B cell (primary cell): ENCODE measurements at regions of chr7 and their contacts with region 1.

Region 1: GRCh38 chr7:116180302-116180701 is 30.0 kb upstream of the TES start:
- DNase-seq: peak; percentile 73
- ATAC-seq: peak; percentile 80
- H3K4me3 ChIP-seq: no peak overlapping the region
- H3K4me3 Mint-ChIP-seq: no peak overlapping the region
- H3K27ac ChIP-seq: no peak overlapping the region
- H3K27ac Mint-ChIP-seq: no peak overlapping the region
- H3K4me1 ChIP-seq: no peaks in the 10 kb centered on the region
- H3K4me1 Mint-ChIP-seq: no peaks in the 10 kb centered on the region
- H3K27me3 ChIP-seq: no peaks in the 10 kb centered on the region
- H3K27me3 Mint-ChIP-seq: no peaks in the 10 kb centered on the region
- CTCF ChIP-seq: peak; percentile 85

Region 2: GRCh38 chr7:116138202-116138801 is 42.0 kb before region 1 on chr7:
- CTCF ChIA-PET with region 1: interaction called, 31 read pairs
- POLR2A ChIA-PET with region 1: no interaction called
- intact Hi-C with region 1: loop called (anchors 1 kb)
- DNase-seq: peak; percentile 74
- ATAC-seq: peak; percentile 85
- H3K4me3 ChIP-seq: no peak overlapping the region
- H3K4me3 Mint-ChIP-seq: no peak overlapping the region
- H3K27ac ChIP-seq: no peak overlapping the region
- H3K27ac Mint-ChIP-seq: no peak overlapping the region
- H3K4me1 ChIP-seq: peaks cover 6 to 7% of the 10 kb centered on the region in 2 donors
- H3K4me1 Mint-ChIP-seq: peaks cover 23% of the 10 kb centered on the region
- H3K27me3 ChIP-seq: no peaks in the 10 kb centered on the region
- H3K27me3 Mint-ChIP-seq: no peaks in the 10 kb centered on the region
- CTCF ChIP-seq: peak; percentile 89

Region 3: GRCh38 chr7:116194115-116194514 is 13.8 kb after region 1 on chr7:
- CTCF ChIA-PET with region 1: interaction called, 11 read pairs
- POLR2A ChIA-PET with region 1: no interaction called
- intact Hi-C with region 1: no loop called
- DNase-seq: no peak
- ATAC-seq: no peak
- H3K4me3 ChIP-seq: no peak overlapping the region
- H3K4me3 Mint-ChIP-seq: no peak overlapping the region
- H3K27ac ChIP-seq: no peak overlapping the region
- H3K27ac Mint-ChIP-seq: no peak overlapping the region
- H3K4me1 ChIP-seq: no peaks in the 10 kb centered on the region
- H3K4me1 Mint-ChIP-seq: no peaks in the 10 kb centered on the region
- H3K27me3 ChIP-seq: peaks cover 0 to 3% (median 0%) of the 10 kb centered on the region in 4 experiments
- H3K27me3 Mint-ChIP-seq: no peaks in the 10 kb centered on the region
- CTCF ChIP-seq: no peak

Region 4: DNA sequence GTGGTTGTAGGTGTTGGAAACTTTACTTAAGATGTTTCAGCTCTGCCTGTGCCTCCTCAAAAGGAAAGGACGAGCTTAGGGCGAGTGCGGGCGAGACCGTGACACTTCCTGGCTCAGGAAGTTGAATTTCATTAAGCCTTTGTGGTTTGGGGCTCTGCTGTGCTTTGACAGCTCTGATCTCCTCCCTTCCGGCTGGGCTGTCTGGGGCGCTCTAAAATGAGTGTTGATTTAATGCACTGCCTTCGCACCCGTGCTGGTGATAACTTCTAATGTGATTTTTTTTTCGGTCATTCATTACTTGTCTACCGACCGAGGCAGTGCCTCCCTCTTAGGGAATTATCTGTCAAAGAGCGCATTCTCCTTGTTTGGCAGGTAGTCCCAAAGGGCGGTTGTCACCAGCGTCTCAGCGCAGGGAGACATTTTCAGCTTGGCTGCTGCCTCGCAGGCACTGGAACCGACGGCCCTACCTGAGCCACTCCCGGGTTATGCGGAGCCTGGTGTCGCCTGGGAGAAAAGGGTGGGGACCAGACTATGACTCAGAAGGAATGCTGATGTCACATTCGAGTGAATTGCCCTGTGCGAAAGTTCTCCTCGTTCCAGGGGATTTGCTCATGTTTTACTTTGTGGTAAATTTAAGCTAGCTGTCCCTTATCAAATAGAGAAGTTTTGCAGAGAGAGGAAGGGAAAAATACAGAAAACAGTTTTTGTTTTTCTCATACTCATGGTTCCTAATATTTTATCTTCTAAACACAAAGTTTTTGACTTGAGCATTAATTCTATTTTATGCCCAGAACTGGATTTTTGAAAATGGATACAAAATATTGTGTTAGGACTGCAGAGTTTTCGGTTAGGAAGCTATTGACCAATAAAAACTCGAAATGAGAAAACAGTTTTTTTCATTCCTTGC is 31.0 kb after region 1 on chr7:
- CTCF ChIA-PET with region 1: interaction called, 36 read pairs
- POLR2A ChIA-PET with region 1: no interaction called
- intact Hi-C with region 1: loop called (anchors 2 kb)
- DNase-seq: peak; percentile 79
- ATAC-seq: peak; percentile 58
- H3K4me3 ChIP-seq: peak overlapping the region; percentile 70 to 97 (median 85)
- H3K4me3 Mint-ChIP-seq: peak overlapping the region; percentile 99
- H3K27ac ChIP-seq: peak overlapping the region; percentile 82 to 89
- H3K27ac Mint-ChIP-seq: peak overlapping the region; percentile 99
- H3K4me1 ChIP-seq: peaks cover 37 to 40% of the 10 kb centered on the region in 2 donors
- H3K4me1 Mint-ChIP-seq: peaks cover 51% of the 10 kb centered on the region
- H3K27me3 ChIP-seq: no peaks in the 10 kb centered on the region
- H3K27me3 Mint-ChIP-seq: no peaks in the 10 kb centered on the region
- CTCF ChIP-seq: no peak

Region 5: GRCh38 chr7:116224492-116225098 is 44.3 kb after region 1 on chr7:
- CTCF ChIA-PET with region 1: interaction called, 497 read pairs
- POLR2A ChIA-PET with region 1: no interaction called
- intact Hi-C with region 1: no loop called
- DNase-seq: peak; percentile 28
- ATAC-seq: peak; percentile 68
- H3K4me3 ChIP-seq: peak overlapping the region in 1 of 5 experiments; percentile 26
- H3K4me3 Mint-ChIP-seq: peak overlapping the region; percentile 73
- H3K27ac ChIP-seq: no peak overlapping the region
- H3K27ac Mint-ChIP-seq: peak overlapping the region; percentile 71
- H3K4me1 ChIP-seq: peaks cover 32 to 48% of the 10 kb centered on the region in 2 donors
- H3K4me1 Mint-ChIP-seq: peaks cover 74% of the 10 kb centered on the region
- H3K27me3 ChIP-seq: no peaks in the 10 kb centered on the region
- H3K27me3 Mint-ChIP-seq: no peaks in the 10 kb centered on the region
- CTCF ChIP-seq: no peak

Region 6: GRCh38 chr7:116242178-116242577 is 61.9 kb after region 1 on chr7:
- CTCF ChIA-PET with region 1: interaction called, 497 read pairs
- POLR2A ChIA-PET with region 1: no interaction called
- intact Hi-C with region 1: no loop called
- DNase-seq: no peak
- ATAC-seq: no peak
- H3K4me3 ChIP-seq: no peak overlapping the region
- H3K4me3 Mint-ChIP-seq: no peak overlapping the region
- H3K27ac ChIP-seq: no peak overlapping the region
- H3K27ac Mint-ChIP-seq: no peak overlapping the region
- H3K4me1 ChIP-seq: no peaks in the 10 kb centered on the region
- H3K4me1 Mint-ChIP-seq: peaks cover 15% of the 10 kb centered on the region
- H3K27me3 ChIP-seq: no peaks in the 10 kb centered on the region
- H3K27me3 Mint-ChIP-seq: no peaks in the 10 kb centered on the region
- CTCF ChIP-seq: no peak

Region 7: DNA sequence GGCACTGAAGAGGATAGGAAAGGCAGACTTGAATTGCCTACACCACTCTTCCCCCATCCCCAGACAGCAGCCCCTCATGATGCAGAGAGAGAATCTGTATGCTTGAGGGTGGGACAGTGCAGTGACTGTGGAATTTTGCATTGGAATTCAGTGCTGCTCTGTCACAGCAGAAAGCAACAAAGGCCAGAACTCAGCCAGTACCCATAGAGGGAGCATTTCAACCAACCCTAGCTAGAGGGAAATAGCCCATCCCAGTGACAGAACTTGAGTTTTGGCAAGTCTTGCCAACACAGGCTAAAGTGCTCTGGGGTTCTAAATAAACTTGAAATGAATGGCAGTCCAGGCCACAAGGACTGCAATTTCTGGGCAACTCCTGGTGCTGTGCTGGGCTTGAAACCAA is 110.4 kb after region 1 on chr7:
- CTCF ChIA-PET with region 1: no interaction called
- POLR2A ChIA-PET with region 1: no interaction called
- intact Hi-C with region 1: no loop called
- DNase-seq: no peak
- ATAC-seq: no peak
- H3K4me3 ChIP-seq: no peak overlapping the region
- H3K4me3 Mint-ChIP-seq: no peak overlapping the region
- H3K27ac ChIP-seq: no peak overlapping the region
- H3K27ac Mint-ChIP-seq: no peak overlapping the region
- H3K4me1 ChIP-seq: no peaks in the 10 kb centered on the region
- H3K4me1 Mint-ChIP-seq: no peaks in the 10 kb centered on the region
- H3K27me3 ChIP-seq: peaks cover 0 to 7% (median 0%) of the 10 kb centered on the region in 4 experiments
- H3K27me3 Mint-ChIP-seq: peaks cover 19% of the 10 kb centered on the region
- CTCF ChIP-seq: no peak